Aorta (tissue), 5 donors: ENCODE measurements at regions of chr10 and their contacts with region 1.

Region 1: DNA sequence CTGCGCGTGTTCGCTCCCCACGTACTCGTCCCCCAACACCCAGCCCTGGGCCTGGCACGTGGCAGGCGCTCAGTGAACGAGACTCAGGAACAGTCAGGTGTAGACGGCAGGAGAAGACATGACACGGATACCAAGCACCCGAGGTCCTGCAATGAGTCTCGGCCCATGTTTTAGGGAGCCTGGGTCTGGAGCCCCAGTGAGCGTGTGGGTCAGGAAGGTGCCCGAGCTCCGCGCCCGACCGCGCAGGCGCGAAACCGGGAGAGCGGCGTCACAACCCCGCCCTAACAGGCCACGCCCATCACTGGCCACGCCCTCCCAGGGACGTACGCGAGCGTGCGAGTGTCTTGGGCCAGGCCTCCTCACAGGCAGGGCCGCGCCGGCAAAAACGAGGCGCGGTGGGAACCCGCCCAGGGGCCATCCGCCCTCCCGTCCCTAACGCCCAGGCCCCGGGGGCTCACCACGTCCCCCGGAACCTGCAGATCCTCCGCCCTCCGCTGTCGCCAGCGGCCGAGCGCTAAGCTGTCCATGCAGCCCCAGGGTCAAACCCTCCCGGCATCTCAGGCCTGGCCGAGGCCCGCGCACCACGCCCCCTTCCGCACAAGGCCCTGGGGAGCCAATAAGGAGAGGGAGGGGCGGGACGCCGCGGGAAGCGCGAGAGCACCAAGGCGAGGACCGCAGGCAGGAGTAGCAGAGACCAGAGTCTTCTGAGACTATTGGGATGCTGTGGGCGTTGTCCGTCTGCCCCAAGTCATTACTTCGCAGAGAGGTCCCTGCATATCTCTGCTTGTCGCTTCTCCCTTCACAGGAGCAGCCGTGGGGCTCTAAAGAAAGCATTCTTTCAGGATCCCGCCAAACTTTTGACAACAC is at the start of gene C10orf143:
- DNase-seq: peak; percentile 99
- ATAC-seq: peak; percentile 99
- H3K4me3 ChIP-seq: peak within 1 kb of the TSS; percentile 55 to 60
- H3K27ac ChIP-seq: peak within 1 kb of the TSS in 1 of 2 donors; percentile 90
- H3K4me1 ChIP-seq: peaks cover 0 to 4% of the 10 kb centered on the region in 2 donors
- H3K27me3 ChIP-seq: no peaks in the 10 kb centered on the region
- total RNA-seq, gene C10orf143: 1.9 to 3.2 TPM

Region 2: DNA sequence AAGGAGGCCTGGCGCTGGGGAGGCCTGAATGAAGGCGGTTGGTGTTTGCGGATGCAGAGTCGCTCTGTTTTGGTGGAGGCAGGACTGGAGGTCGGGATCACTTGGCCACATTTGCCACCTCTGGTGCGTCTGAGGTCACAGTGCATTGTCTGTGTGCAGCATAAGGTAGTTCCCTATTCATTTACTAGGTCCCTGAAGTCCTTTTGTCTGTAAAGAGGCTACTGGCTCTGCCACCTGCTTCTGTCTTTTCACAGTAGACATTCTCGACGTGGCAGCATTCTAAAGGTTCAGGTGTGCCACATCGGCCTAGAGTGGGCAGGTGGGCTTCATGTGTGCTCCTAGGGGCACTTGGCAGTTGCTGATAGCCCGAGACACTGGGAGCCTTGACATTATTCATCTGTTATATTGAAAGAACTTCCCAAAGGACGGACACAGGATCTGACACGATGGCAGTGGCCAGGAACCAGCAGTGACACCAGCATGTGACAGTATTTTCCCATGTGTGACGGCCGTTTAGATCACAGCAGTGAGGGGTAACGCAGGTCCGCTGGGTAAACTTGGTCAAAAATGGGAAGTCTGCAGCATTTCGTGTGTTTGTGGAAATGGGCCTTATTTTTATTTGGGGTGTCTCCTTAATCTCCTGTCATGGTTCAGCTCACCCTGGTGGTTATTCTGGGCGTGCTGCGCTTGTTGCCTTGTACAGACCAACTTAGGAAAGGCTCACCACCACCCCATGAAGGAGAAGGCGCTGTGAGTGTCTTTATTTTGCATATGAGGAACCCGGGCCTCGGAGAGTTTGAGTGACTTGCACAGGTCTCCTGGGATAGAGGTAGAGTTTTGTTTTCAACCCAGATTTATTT is 637.6 kb before region 1 on chr10:
- intact Hi-C with region 1: loop called in 1 of 2 experiments (anchors 10 kb)
- DNase-seq: no peak
- ATAC-seq: no peak
- H3K4me3 ChIP-seq: no peak overlapping the region
- H3K27ac ChIP-seq: no peak overlapping the region
- H3K4me1 ChIP-seq: no peaks in the 10 kb centered on the region
- H3K27me3 ChIP-seq: no peaks in the 10 kb centered on the region

Region 3: DNA sequence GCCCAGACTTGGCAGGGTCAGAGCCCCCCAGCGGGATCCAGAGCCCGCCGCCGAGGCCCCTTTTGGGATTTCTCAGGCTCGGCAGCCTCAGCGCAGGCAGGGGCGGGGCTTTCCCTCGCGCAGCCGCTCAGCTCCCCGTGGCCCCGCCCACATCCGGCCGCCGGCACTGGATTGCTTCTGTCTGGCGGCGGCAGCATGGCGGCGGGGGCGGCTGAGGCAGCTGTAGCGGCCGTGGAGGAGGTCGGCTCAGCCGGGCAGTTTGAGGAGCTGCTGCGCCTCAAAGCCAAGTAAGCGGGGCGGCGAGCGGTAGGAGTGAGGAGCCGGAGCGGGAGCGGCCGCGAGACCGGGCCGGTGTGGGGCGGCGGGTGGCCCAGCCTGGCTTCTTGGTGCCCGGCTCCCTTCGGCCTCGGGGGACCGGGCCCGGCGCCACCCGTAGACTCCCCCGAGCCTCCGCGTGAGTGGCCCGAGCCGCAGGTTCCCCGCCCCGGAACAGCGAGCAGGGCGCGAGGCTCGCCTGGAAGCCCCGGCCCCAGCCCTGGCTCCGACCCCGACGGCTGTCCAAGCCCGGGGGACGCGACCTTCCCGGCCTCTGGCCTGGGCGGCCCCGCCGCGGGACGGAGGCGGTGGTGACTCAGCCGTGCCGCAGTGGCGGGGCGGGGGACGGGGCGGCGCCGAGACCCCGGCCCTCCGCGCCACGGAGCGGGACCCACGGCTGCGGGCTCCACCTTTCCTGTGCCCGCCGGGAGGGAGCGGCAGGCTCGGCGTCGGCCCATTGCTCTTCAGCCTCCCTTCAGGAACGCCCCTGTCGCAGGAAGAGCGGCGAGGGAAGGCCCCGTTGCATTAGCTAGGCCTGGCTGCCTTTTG is 26.0 kb after region 1 on chr10 and contains the start of gene GLRX3:
- intact Hi-C with region 1: loop called (anchors 1 kb)
- DNase-seq: peak; percentile 92 to 96
- ATAC-seq: peak; percentile 98
- H3K4me3 ChIP-seq: peak within 1 kb of the TSS; percentile 97 to 99
- H3K27ac ChIP-seq: peak within 1 kb of the TSS in 1 of 2 donors; percentile 74
- H3K4me1 ChIP-seq: peaks cover 0 to 14% of the 10 kb centered on the region in 2 donors
- H3K27me3 ChIP-seq: no peaks in the 10 kb centered on the region
- total RNA-seq, gene GLRX3: 47.1 to 50.0 TPM

Region 4: DNA sequence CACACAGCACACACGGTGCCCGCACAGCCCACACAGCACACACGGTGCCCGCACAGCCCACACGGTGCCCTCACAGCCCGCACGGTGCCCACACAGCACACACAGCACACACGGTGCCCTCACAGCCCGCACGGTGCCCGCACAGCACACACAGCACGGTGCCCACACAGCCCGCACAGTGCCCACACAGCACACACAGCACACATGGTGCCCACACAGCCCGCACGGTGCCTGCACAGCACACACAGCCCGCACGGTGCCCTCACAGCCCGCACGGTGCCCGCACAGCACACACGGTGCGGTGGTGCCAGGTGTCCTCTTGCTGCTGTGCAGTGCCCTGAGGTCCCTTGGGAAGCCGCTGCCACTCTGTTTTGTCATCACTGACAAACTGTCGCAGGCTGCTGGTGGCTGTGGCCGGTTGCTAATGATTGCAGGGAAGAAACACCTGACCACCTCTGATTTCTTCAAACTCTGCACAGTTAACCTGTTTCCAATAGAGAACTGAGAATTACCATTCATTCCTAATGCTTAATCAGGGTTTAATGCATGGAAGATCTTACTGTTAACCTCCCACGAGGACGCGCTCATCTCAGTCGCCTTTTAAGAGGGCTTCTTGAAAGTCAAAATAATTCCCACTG is 92.6 kb after region 1 on chr10:
- intact Hi-C with region 1: no loop called
- DNase-seq: peak in 1 of 2 donors; percentile 52
- ATAC-seq: no peak
- H3K4me3 ChIP-seq: no peak overlapping the region
- H3K27ac ChIP-seq: no peak overlapping the region
- H3K4me1 ChIP-seq: no peaks in the 10 kb centered on the region
- H3K27me3 ChIP-seq: no peaks in the 10 kb centered on the region

Region 5: GRCh38 chr10:130371666-130372065 is 261.2 kb after region 1 on chr10:
- intact Hi-C with region 1: no loop called
- DNase-seq: no peak
- ATAC-seq: no peak
- H3K4me3 ChIP-seq: no peak overlapping the region
- H3K27ac ChIP-seq: no peak overlapping the region
- H3K4me1 ChIP-seq: no peaks in the 10 kb centered on the region
- H3K27me3 ChIP-seq: no peaks in the 10 kb centered on the region